Endothelial cell of umbilical vein (primary cell): ENCODE measurements at regions of chr7 and their contacts with region 1.

Region 1: DNA sequence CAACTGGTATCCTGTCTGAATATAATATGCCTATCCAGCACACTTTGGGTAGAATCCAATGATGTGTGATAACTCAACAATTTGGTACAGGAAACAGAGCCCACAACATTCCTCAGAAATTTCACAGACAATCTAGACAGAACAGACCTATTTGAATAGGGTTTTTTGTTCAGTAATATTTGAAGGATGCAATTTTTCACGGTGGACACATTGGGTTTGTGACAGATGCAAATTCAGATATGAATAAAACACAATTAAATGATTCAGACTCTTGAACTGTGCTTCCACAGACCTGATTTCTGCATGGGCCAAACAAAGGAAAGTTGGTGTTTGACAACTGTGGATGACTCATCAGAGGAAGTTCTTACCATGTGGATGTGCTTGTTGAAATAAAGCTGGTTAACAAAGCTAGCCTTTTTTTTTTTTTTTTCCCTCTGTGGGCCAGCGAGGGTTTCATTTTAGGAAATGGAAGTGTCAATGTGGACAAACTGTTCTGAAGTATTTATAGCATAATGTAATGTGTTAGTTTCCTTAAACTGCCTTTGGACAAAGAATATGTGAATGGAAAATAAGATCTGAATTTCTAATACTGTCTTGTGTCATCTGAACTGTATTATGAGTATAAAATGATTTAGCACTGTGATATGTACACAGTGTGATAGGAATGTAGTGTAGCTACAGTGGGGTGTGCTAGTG is 43.2 kb upstream of the FAM133B start:
- DNase-seq: peak; percentile 98
- H3K4me3 ChIP-seq: peak overlapping the region in 1 of 3 experiments; percentile 31
- H3K27ac ChIP-seq: peak overlapping the region; percentile 99
- H3K4me1 ChIP-seq: peaks cover 57% of the 10 kb centered on the region
- H3K27me3 ChIP-seq: no peaks in the 10 kb centered on the region
- CTCF ChIP-seq: no peak
- POLR2A ChIP-seq: peak; percentile 27

Region 2: GRCh38 chr7:92590711-92591310 is 42.5 kb before region 1 on chr7:
- CTCF ChIA-PET with region 1: no interaction called
- POLR2A ChIA-PET with region 1: no interaction called
- dilution Hi-C with region 1: no loop called
- intact Hi-C with region 1: loop called (anchors 1 kb)
- DNase-seq: no peak
- H3K4me3 ChIP-seq: peak overlapping the region in 2 of 3 experiments; percentile 33 to 95
- H3K27ac ChIP-seq: no peak overlapping the region
- H3K4me1 ChIP-seq: peaks cover 12% of the 10 kb centered on the region
- H3K27me3 ChIP-seq: no peaks in the 10 kb centered on the region
- CTCF ChIP-seq: no peak
- POLR2A ChIP-seq: no peak

Region 3: GRCh38 chr7:92682903-92683539 is 49.7 kb after region 1 on chr7:
- CTCF ChIA-PET with region 1: interaction called, 3 read pairs
- POLR2A ChIA-PET with region 1: no interaction called
- dilution Hi-C with region 1: no loop called
- intact Hi-C with region 1: loop called (anchors 1 kb)
- DNase-seq: peak; percentile 69
- H3K4me3 ChIP-seq: no peak overlapping the region
- H3K27ac ChIP-seq: no peak overlapping the region
- H3K4me1 ChIP-seq: peaks cover 5% of the 10 kb centered on the region
- H3K27me3 ChIP-seq: no peaks in the 10 kb centered on the region
- CTCF ChIP-seq: no peak
- POLR2A ChIP-seq: no peak

Region 4: GRCh38 chr7:92781117-92781720 is 147.9 kb after region 1 on chr7:
- CTCF ChIA-PET with region 1: no interaction called
- POLR2A ChIA-PET with region 1: no interaction called
- dilution Hi-C with region 1: no loop called
- intact Hi-C with region 1: loop called (anchors 1 kb)
- DNase-seq: peak; percentile 89
- H3K4me3 ChIP-seq: no peak overlapping the region
- H3K27ac ChIP-seq: peak overlapping the region; percentile 31
- H3K4me1 ChIP-seq: peaks cover 20% of the 10 kb centered on the region
- H3K27me3 ChIP-seq: no peaks in the 10 kb centered on the region
- CTCF ChIP-seq: no peak
- POLR2A ChIP-seq: no peak

Region 5: GRCh38 chr7:93949461-93949860 is 1316.1 kb after region 1 on chr7:
- CTCF ChIA-PET with region 1: no interaction called
- POLR2A ChIA-PET with region 1: no interaction called
- dilution Hi-C with region 1: no loop called
- intact Hi-C with region 1: loop called (anchors 10 kb)
- DNase-seq: peak; percentile 84
- H3K4me3 ChIP-seq: no peak overlapping the region
- H3K27ac ChIP-seq: peak overlapping the region; percentile 72
- H3K4me1 ChIP-seq: peaks cover 38% of the 10 kb centered on the region
- H3K27me3 ChIP-seq: no peaks in the 10 kb centered on the region
- CTCF ChIP-seq: no peak
- POLR2A ChIP-seq: no peak